ENCODE measurements at regions of chr1 and their contacts with region 1.

Region 1: GRCh38 chr1:116288201-116288761 is 84.8 kb upstream of the ATP1A1 start:
- DNase-seq: no peak
- ATAC-seq: no peak
- H3K4me3 ChIP-seq: no peak overlapping the region
- H3K27ac ChIP-seq: no peak overlapping the region; the same call in 1 of the 2 replicates
- H3K4me1 ChIP-seq: peaks cover 33% of the 10 kb centered on the region
- H3K27me3 ChIP-seq: no peaks in the 10 kb centered on the region
- CTCF ChIP-seq: no peak

Region 2: DNA sequence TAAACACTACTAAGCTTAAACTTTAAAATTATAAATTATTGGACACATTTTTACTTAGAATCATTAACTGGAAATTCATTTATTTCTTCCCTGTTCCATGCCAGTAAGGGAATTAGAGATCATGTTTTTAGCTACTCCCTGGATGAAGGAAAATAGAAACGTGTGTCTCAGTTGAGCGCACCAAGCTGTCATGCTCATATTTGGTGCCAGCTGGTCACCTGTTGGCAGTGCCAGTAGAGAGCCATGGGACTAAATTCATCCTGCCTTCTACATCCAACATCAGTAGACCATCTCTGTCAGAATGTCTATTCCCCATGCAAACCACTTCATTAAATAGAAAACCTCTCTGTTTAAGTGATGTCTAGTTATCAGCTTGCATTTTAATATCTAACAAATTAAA is 329.4 kb before region 1 on chr1:
- CTCF ChIA-PET with region 1: no interaction called
- POLR2A ChIA-PET with region 1: no interaction called
- intact Hi-C with region 1: no loop called
- DNase-seq: no peak
- ATAC-seq: no peak
- H3K4me3 ChIP-seq: no peak overlapping the region
- H3K27ac ChIP-seq: no peak overlapping the region
- H3K4me1 ChIP-seq: no peaks in the 10 kb centered on the region
- H3K27me3 ChIP-seq: no peaks in the 10 kb centered on the region
- CTCF ChIP-seq: no peak

Region 3: GRCh38 chr1:116232989-116233514 is 55.2 kb before region 1 on chr1:
- CTCF ChIA-PET with region 1: no interaction called
- POLR2A ChIA-PET with region 1: no interaction called
- intact Hi-C with region 1: loop called (anchors 10 kb)
- DNase-seq: no peak
- ATAC-seq: no peak
- H3K4me3 ChIP-seq: no peak overlapping the region
- H3K27ac ChIP-seq: no peak overlapping the region
- H3K4me1 ChIP-seq: no peaks in the 10 kb centered on the region
- H3K27me3 ChIP-seq: peaks cover 17% of the 10 kb centered on the region
- CTCF ChIP-seq: no peak; the same call in 1 of the 2 replicates

Measured in PC-3 (cell line).